ENCODE measurements at regions of chr6 and their contacts with region 1.

Region 1: DNA sequence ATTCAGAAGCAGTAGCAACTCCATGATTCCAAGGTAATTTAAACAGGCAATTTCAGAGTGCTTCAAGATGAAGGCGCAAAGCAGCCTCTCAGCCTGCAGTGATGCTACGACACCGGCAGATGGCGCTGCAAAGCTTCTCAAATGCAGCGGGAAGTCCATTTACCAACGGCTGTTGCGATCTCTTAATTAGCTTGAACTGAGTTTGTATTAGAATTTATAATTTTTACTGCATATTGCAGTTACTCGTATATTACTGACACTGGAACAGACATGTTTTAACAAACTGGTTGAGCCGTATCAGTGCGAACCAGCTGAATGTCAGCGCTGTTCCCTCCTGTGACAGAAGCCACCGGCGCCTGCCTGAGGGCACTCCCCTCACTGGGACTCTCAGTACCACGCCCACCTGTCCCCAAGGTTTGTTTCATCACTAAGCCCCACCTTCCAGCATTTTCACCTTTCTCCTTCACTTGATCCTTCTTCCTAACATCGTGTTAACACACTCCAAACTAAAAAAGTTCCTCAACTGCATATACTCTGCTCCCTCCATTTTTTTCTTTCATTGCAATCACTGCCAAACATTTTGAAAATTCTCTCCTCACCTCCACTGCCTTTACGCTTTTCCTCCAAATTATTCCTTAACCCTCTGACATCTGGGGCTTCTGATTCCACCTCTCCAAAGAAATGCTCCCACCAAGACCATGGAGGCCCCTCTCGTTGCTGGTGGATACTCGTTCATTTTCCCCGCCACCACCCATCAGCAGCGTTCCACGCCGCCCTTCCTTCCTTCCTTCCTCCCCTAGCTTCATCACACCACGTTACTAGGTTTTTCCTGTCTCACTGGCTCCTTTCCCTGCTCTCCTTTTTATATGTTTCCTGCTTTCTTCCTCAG is 14.5 kb downstream of the GNL1 start:
- DNase-seq: peak; percentile 80

Region 2: GRCh38 chr6:30453508-30454116 is 88.1 kb before region 1 on chr6:
- in situ Hi-C with region 1: loop called (anchors 10 kb)
- DNase-seq: peak; percentile 82

Region 3: DNA sequence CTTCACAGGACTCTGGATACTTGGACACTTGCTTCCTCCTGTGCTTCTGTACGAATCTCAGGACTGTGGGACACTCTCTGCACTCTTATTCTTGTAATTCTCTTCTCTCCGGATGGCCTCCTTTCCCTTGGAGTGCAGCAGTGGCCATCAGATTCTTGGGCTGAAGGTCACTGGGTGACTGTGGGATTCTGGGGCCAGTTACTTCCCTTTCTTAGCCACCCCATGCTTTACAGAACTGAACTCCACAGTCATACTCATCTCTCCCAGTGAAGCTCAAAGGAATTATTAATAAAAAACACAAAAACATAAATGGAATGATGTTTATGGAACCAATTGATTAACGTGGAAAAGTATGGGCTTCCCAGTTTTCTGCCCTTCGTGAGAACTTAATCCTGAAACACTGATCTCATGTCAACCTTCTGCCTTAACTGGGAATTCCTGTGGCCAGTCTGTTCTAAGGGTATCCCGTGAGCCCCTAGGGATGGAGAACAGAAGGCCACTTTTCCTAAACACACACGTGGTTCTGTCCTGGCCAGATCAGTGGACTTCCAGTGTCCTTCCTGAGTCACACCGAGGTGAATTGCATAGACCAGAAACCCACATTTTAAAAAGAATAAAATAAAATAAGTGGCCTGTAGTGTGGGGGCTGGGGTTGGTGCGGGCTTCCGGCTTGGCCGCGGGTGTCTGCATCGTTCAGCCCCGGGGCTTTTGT is 76.0 kb before region 1 on chr6:
- in situ Hi-C with region 1: no loop called
- DNase-seq: no peak

Region 4: GRCh38 chr6:30500421-30501355 is 41.1 kb before region 1 on chr6:
- in situ Hi-C with region 1: loop called (anchors 5 kb)
- DNase-seq: no peak

Measured in Caki2 (cell line).